ENCODE measurements at regions of chr6 and their contacts with region 1.

Region 1: GRCh38 chr6:3990692-3991501 is 88.0 kb downstream of the FAM217A start:
- DNase-seq: peak; percentile 92 to 95
- ATAC-seq: peak; percentile 94
- H3K4me3 ChIP-seq: peak overlapping the region; percentile 60 to 84
- H3K27ac ChIP-seq: peak overlapping the region in 1 of 2 donors; percentile 92
- H3K4me1 ChIP-seq: peaks cover 1 to 3% of the 10 kb centered on the region in 2 donors
- H3K27me3 ChIP-seq: no peaks in the 10 kb centered on the region

Region 2: DNA sequence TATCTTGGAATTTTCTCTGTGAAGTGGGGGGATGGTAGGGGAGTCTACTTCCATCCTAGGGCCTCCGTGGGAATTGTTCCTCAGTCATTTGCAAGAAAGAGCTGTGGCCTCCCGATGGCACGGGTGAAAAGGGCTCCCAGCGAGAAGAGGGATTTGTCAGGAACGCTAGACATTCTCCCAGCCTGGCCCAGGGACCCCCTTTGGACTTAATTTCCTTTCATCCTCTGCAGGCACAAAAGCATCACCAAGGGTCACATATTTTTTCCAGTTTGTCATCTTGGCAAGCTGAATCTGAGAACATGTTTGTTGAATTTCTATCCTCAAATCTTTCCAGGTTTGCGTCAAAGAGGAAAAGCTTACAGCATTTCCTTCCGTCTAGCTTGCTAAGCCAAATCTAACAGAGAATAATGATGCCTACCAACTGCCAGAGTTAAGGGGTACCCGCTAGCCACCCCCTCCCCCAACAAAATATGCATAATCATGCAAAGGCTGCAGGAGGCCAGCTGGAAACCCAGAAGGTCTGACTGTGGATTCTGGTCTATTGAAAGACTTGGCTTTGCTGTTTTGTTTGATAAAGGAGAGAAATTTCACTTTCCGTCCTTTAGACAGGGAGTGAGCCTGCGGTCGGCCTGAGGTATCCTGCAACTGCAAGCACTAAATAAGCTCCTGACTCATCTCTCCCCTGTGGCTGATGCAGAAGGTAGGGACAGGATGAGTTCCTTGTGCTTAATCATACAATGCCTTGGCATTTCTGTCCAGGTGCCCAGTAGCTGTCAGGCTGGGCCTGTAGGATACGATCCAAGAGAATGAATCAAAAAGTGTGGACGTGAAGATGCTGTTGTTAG is 709.0 kb before region 1 on chr6:
- intact Hi-C with region 1: loop called (anchors 5 kb)
- DNase-seq: peak in 1 of 2 donors; percentile 72
- ATAC-seq: no peak
- H3K4me3 ChIP-seq: no peak overlapping the region
- H3K27ac ChIP-seq: peak overlapping the region in 1 of 2 donors; percentile 29
- H3K4me1 ChIP-seq: no peaks in the 10 kb centered on the region
- H3K27me3 ChIP-seq: no peaks in the 10 kb centered on the region

Region 3: DNA sequence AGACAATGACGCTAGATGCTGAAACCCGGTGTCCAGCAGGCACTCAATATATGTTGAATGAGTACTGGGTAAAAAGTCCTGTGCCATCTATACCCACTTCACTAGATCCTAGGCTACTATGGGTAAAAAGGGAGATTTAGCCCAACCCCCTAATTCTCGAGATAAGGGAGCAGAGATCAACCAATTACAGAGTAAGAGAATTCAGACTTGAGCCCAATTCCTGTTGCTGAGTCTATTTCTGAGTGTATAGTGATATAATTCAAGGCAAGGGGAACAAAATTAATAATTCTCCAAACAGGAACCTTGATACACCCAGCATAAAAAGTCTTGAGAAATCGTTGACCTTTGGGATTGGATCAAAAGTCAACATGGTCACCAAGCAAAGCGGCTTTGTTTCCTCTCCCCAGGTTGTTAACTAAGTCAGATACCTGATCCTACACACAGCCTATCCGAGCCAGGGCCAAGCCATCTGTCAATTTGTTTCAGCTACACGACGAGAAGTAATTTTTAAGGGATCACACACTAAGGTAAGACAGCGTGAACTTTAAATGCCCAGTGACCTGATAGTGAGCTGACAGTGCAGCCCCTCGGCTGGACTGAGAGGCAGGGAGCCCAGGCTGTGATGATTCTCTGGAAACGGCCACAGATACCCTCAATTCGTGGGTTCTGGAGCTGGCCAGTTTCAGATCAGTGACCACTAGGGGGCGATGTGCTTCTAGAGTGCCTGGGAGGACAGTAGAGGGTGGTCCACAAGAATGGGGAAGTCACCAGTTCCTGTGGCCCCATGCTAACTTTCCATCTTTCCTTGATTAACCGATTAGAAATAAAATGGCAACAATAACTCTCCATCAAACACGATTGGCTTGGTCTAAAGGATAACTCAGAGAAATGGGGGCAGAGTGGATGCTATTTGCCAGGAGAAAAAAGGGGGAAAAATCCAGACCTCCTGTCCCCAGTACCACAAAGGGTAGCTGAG is 580.2 kb before region 1 on chr6:
- intact Hi-C with region 1: loop called in 1 of 2 experiments (anchors 10 kb)
- DNase-seq: peak in 1 of 2 donors; percentile 72
- ATAC-seq: no peak
- H3K4me3 ChIP-seq: no peak overlapping the region
- H3K27ac ChIP-seq: no peak overlapping the region
- H3K4me1 ChIP-seq: no peaks in the 10 kb centered on the region
- H3K27me3 ChIP-seq: no peaks in the 10 kb centered on the region

Region 4: GRCh38 chr6:3742426-3743344 is 248.2 kb before region 1 on chr6:
- intact Hi-C with region 1: loop called (anchors 2 to 5 kb)
- DNase-seq: peak; percentile 89 to 97
- ATAC-seq: peak; percentile 86
- H3K4me3 ChIP-seq: peak overlapping the region in 1 of 2 donors; percentile 23
- H3K27ac ChIP-seq: peak overlapping the region in 1 of 2 donors; percentile 97
- H3K4me1 ChIP-seq: no peaks in the 10 kb centered on the region
- H3K27me3 ChIP-seq: no peaks in the 10 kb centered on the region

Region 5: GRCh38 chr6:3848925-3849605 is 141.8 kb before region 1 on chr6 and contains the start of gene FAM50B:
- intact Hi-C with region 1: loop called (anchors 2 to 5 kb)
- DNase-seq: peak; percentile 95 to 98
- ATAC-seq: peak; percentile 98
- H3K4me3 ChIP-seq: peak within 1 kb of the TSS in 1 of 2 donors; percentile 9
- H3K27ac ChIP-seq: peak within 1 kb of the TSS in 1 of 2 donors; percentile 55
- H3K4me1 ChIP-seq: peaks cover 0 to 4% of the 10 kb centered on the region in 2 donors
- H3K27me3 ChIP-seq: no peaks in the 10 kb centered on the region
- total RNA-seq, gene FAM50B: 7.8 to 9.1 TPM

Region 6: GRCh38 chr6:3939964-3940363 is 50.9 kb before region 1 on chr6:
- intact Hi-C with region 1: loop called in 1 of 2 experiments (anchors 5 kb)
- DNase-seq: peak in 1 of 2 donors; percentile 52
- ATAC-seq: no peak
- H3K4me3 ChIP-seq: no peak overlapping the region
- H3K27ac ChIP-seq: no peak overlapping the region
- H3K4me1 ChIP-seq: no peaks in the 10 kb centered on the region
- H3K27me3 ChIP-seq: no peaks in the 10 kb centered on the region